CD4-positive, alpha-beta T cell (primary cell): ENCODE measurements at regions of chr19 and their contacts with region 1.

Region 1: DNA sequence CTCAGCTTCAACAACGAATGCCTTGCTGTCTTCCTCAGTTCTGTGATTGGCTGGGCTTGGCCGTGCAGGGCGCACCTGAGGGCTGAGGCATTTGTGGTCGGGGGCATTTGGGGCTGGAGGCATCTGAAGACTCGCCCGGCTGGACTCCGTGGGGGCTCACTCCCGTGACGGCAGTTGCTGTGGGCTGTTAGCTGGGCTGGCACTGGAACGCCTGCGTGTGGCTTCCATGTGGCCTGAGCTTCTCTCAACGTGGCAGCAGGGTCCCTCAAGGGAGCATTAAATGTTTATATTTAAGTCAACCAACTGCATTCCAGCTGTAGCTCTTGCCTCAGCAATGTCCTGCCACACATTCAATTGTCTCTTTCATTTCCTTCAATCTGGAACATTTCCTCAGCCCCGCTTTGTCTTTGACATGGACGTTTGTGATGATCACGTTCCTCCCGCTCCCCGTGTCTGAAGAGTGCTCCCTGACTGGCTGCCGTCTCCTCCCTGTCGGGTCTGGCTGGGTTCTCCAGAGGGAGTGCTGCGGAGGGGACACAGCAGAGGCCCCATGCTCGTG is 21.0 kb downstream of the CCDC8 start:
- DNase-seq: no peak
- ATAC-seq: no peak
- H3K4me3 ChIP-seq: no peak overlapping the region
- H3K4me3 Mint-ChIP-seq: no peak overlapping the region
- H3K27ac ChIP-seq: no peak overlapping the region
- H3K27ac Mint-ChIP-seq: no peak overlapping the region
- H3K4me1 ChIP-seq: peaks cover 3% of the 10 kb centered on the region
- H3K4me1 Mint-ChIP-seq: peaks cover 20% of the 10 kb centered on the region
- H3K27me3 ChIP-seq: no peaks in the 10 kb centered on the region
- H3K27me3 Mint-ChIP-seq: no peaks in the 10 kb centered on the region
- CTCF ChIP-seq: no peak

Region 2: DNA sequence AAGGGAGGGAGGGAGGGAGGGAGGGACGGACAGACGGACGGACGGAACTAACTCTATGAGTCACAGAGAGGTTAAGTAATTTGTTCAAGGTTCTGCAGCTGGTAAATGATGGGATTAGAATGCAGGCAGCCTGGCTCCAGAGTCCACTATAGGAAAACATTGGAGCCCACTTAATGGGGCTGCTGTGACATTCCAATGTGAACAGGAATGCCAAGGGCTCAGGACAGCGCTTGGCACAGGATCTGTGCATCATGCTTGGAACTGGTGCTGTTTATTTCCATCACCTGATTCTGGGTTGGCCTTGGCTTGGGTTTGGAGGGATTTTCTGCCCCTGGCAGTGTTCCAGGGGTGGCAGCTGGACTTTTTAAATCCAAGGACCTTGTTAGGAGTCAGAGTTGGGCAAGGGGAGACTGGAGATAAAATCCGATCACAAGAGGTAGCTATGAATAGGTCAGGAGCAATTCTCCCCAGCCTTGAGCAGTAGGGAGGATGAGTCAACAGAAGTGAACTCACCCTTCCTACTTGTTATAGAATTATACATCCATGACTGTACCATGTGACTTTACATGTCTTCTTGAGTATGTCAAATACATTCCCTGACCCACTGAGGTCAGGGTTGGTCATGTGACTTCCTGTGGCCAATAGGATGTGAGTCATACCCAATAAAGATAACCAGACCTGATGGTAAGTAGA is 103.3 kb before region 1 on chr19:
- CTCF ChIA-PET with region 1: no interaction called
- POLR2A ChIA-PET with region 1: no interaction called
- intact Hi-C with region 1: loop called in 1 of 2 experiments (anchors 10 kb)
- DNase-seq: no peak
- ATAC-seq: no peak
- H3K4me3 ChIP-seq: no peak overlapping the region
- H3K4me3 Mint-ChIP-seq: no peak overlapping the region
- H3K27ac ChIP-seq: no peak overlapping the region
- H3K27ac Mint-ChIP-seq: no peak overlapping the region
- H3K4me1 ChIP-seq: no peaks in the 10 kb centered on the region
- H3K4me1 Mint-ChIP-seq: no peaks in the 10 kb centered on the region
- H3K27me3 ChIP-seq: peaks cover 5 to 10% of the 10 kb centered on the region in 2 experiments
- H3K27me3 Mint-ChIP-seq: peaks cover 7% of the 10 kb centered on the region
- CTCF ChIP-seq: no peak

Region 3: DNA sequence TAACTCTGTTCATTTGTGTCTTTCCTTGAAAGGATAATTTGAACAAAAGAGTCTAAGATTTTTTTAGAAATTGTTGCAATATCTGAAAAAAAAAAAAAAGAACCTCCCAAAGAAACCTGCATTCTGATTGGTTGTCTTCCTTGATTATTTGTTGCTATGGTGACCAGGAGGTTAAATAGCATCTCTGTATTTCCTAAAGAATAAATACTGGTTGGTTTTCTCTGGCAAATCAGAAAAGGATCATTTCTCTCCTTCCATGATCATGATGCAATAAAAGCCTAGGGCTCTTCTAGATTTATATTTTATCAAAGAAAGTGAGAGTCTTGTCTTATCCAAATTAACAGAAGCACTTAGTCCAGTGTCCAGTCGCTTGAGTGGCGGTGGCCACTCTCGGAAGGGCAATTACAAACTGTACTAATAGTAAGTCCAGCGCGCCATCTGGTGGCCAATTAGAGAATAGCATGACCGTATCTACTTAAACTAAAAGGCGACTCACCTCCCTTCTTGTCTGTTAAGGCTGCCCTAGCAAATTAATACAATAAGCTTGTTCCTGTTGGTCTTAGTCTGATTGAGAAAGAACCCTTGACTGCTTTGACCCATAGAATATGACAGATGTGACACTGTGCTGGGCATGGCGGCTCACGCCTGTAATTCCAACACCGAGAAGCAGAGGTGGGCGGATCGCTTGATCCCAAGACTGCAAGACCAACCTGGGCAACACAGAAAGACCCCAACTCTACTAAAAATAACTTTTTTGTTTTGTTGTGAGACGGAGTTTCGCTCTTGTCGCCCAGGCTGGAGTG is 150.3 kb after region 1 on chr19:
- CTCF ChIA-PET with region 1: no interaction called
- POLR2A ChIA-PET with region 1: no interaction called
- intact Hi-C with region 1: loop called (anchors 1 to 2 kb)
- DNase-seq: peak; percentile 65 to 90 (median 76)
- ATAC-seq: peak; percentile 68
- H3K4me3 ChIP-seq: no peak overlapping the region
- H3K4me3 Mint-ChIP-seq: no peak overlapping the region
- H3K27ac ChIP-seq: no peak overlapping the region
- H3K27ac Mint-ChIP-seq: no peak overlapping the region
- H3K4me1 ChIP-seq: peaks cover 13% of the 10 kb centered on the region
- H3K4me1 Mint-ChIP-seq: peaks cover 7% of the 10 kb centered on the region
- H3K27me3 ChIP-seq: no peaks in the 10 kb centered on the region
- H3K27me3 Mint-ChIP-seq: peaks cover 3% of the 10 kb centered on the region
- CTCF ChIP-seq: peak; percentile 97

Region 4: GRCh38 chr19:46564701-46565100 is 172.4 kb after region 1 on chr19:
- CTCF ChIA-PET with region 1: no interaction called
- POLR2A ChIA-PET with region 1: no interaction called
- intact Hi-C with region 1: no loop called
- DNase-seq: no peak
- ATAC-seq: no peak
- H3K4me3 ChIP-seq: no peak overlapping the region
- H3K4me3 Mint-ChIP-seq: no peak overlapping the region
- H3K27ac ChIP-seq: no peak overlapping the region
- H3K27ac Mint-ChIP-seq: no peak overlapping the region
- H3K4me1 ChIP-seq: no peaks in the 10 kb centered on the region
- H3K4me1 Mint-ChIP-seq: no peaks in the 10 kb centered on the region
- H3K27me3 ChIP-seq: no peaks in the 10 kb centered on the region
- H3K27me3 Mint-ChIP-seq: no peaks in the 10 kb centered on the region
- CTCF ChIP-seq: no peak